ENCODE measurements at regions of chr13 and their contacts with region 1.

Region 1: DNA sequence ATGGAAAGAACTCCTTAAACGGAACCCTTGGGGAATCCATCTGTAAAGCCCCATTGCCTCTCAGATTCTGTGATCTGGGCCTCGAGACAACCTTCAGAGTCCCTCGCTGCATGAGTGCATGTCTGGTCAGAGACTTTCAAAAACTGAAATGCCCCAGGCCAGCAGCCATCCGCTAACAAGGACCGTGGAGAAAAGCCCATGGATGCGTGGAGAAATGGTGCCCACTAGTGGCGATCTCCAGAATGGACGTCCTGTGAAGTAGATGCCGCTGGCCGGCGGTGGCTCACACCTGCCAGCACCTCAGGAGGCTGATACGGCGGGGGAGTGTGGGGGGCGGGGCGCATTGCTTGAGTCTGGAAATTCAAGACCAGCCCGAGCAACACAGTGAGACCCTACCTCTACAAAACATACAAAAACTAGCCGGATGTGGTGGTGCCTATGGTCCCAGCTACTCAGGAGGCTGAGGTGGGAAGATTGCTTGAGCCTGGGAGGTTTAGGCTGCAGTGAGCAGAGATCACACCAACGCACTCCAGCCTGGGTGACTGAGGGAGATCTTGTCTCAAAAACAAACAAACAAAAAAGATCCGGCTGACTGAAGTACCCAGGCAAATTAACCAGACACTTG is 7.9 kb upstream of the CDC16 start:
- DNase-seq: peak; percentile 75
- H3K4me3 Mint-ChIP-seq: no peak overlapping the region
- H3K27ac Mint-ChIP-seq: no peak overlapping the region
- H3K4me1 Mint-ChIP-seq: peaks cover 14% of the 10 kb centered on the region
- H3K27me3 Mint-ChIP-seq: peaks cover 27% of the 10 kb centered on the region

Region 2: DNA sequence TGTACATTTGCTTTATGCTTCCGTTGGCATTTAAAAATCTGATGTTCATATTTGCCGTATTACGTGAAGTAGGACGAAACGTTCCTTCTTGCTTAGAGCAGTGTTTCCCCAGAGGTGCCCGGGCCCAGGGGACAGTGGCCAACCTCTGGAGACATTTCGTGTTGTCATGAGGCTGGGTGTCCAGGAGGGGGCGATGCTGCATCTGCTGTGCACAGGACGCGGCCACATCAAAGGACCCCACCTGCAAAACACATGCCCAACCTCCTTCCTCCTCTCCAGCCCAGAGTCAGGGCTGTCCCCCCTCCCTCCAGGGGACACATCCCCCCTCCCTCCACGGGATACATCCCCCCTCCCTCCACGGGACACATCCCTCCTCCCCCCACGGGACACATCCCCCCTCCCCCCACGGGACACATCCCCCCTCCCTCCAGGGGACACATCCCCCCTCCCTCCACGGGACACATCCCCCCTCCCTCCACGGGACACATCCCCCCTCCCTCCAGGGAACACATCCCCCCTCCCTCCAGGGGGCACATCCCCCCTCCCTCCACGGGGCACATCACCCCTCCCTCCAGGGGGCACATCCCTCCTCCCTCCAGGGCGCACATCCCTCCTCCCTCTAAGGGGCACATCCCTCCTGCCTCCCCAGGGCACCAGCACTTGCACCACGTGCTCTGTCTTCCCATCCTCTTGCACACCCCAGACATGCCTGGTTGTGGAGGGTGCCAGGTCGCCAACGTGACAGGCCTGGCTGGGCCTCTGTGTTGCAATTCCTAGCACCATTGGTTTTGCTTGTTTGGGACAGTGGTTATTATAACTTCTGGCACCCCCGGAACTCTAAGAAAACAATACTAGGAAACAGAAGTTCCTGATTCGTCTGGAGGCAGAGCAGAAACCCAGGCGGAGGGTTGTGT is 409.6 kb before region 1 on chr13:
- intact Hi-C with region 1: loop called (anchors 1 kb)
- DNase-seq: peak; percentile 80
- H3K4me3 Mint-ChIP-seq: peak overlapping the region; percentile 98
- H3K27ac Mint-ChIP-seq: peak overlapping the region; percentile 57
- H3K4me1 Mint-ChIP-seq: peaks cover 16% of the 10 kb centered on the region
- H3K27me3 Mint-ChIP-seq: no peaks in the 10 kb centered on the region

Region 3: DNA sequence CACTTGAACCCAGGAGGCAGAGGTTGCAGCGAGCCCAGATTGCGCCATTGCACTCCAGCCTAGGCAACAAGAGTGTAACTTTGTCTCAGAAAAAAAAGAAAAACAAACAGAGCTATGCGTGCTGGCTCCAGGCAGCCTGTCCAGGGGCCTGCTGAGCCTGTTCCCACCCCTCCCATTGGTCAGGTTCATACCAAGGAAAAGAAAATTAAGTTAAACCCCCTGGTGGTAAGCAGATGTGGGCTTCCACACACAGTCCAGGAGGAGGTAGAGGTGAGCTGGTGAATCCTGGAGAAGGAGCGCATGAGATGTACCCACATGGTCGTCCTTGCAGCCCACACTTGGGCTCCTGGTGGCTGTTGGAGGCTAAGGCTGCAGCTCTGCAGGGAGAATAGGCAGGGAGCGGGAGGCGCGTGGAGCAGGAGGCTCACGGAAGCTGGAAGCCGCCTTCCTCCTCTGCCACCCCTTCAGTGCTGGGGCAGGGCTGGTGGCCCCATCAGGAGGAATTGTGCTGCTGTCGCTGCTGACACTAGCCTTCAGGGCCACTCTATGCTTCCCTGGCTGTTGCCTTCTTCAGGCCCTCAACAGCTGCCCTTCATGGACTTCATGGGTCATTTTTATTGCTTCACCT is 77.0 kb after region 1 on chr13:
- intact Hi-C with region 1: no loop called
- DNase-seq: no peak
- H3K4me3 Mint-ChIP-seq: no peak overlapping the region
- H3K27ac Mint-ChIP-seq: no peak overlapping the region
- H3K4me1 Mint-ChIP-seq: no peaks in the 10 kb centered on the region
- H3K27me3 Mint-ChIP-seq: no peaks in the 10 kb centered on the region

Measured in activated T-helper 2 cell treated with anti-CD3 and anti-CD28 coated beads, Interferon-gamma antibody, Interleukin-2, Interleukin-4, amounts not matched to agents 10 μg/mL and 5 μg/mL and 100 μg/mL, durations not matched to agents 14 hours and 24 hours and 36 hours (primary cell).